ENCODE measurements at regions of chr12 and their contacts with region 1.

Region 1: DNA sequence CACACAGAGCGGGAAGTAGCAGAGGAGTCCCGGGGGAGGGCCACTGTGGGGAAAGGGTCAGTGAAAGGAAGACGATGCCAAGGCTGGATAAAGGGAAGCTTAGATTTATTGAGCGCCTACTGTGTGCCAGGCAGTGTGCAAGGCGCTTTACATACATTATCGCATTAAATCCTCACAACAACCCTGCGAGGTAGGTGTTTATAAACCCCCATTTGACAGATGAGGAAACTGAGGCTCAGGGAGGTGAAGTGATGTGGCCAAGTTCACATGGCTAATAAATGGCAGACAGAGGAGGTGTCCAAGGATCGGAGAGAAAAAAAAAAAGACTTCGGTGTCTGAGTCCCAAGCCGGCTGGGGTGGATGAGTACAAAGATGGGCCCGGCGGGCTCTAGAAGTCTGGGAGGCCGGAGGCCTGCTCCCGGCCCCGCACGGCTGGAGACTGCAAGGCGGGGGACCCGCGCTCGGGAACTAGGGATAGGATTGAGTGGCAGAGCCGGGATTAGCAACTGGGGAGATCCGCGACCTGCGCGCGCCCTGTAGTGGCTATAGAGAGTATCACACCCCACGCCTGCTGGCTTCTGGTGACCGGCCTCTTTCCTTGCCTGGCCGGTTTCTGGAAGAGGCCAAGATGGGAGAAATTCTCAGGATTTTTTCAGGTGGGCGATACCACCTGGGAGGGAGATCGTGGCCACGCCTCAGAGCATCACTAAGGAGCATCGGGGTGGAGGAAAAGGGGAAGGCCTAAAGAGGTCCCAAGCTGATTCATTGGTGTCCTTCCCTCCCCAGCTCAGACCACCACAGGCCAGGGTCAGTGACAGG is 3.9 kb downstream of the DDN start:
- DNase-seq: peak; percentile 39
- H3K4me3 Mint-ChIP-seq: no peak overlapping the region
- H3K27ac Mint-ChIP-seq: peak overlapping the region; percentile 52
- H3K4me1 Mint-ChIP-seq: peaks cover 25% of the 10 kb centered on the region
- H3K27me3 Mint-ChIP-seq: peaks cover 49% of the 10 kb centered on the region

Region 2: GRCh38 chr12:48142818-48143674 is 852.2 kb before region 1 on chr12:
- intact Hi-C with region 1: no loop called
- DNase-seq: no peak
- H3K4me3 Mint-ChIP-seq: no peak overlapping the region
- H3K27ac Mint-ChIP-seq: no peak overlapping the region
- H3K4me1 Mint-ChIP-seq: no peaks in the 10 kb centered on the region
- H3K27me3 Mint-ChIP-seq: no peaks in the 10 kb centered on the region

Region 3: DNA sequence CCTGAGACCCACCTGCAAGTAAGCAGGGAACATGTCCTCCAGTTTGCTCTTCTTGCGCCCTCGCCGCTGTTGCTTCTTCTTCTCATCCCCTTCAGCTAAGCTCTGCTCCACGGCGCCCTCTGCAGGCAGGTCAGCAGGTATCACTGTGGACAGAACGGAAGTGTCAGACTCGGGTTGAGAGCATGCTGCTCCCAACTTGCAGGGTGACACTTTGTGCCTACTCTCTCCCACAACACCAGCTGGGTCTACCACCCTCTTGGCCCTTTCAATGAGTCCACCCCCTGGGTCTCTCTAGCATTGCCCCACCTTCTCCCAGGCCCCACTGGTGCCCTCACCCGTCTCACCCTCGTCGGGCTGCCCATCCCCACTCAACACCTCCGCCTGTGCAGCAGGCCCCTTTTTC is 48.6 kb after region 1 on chr12:
- intact Hi-C with region 1: loop called (anchors 1 kb)
- DNase-seq: peak; percentile 45
- H3K4me3 Mint-ChIP-seq: no peak overlapping the region
- H3K27ac Mint-ChIP-seq: no peak overlapping the region
- H3K4me1 Mint-ChIP-seq: no peaks in the 10 kb centered on the region
- H3K27me3 Mint-ChIP-seq: no peaks in the 10 kb centered on the region

Region 4: GRCh38 chr12:49342066-49342913 is 347.0 kb after region 1 on chr12:
- intact Hi-C with region 1: loop called (anchors 5 kb)
- DNase-seq: peak; percentile 56
- H3K4me3 Mint-ChIP-seq: peak overlapping the region; percentile 37
- H3K27ac Mint-ChIP-seq: no peak overlapping the region
- H3K4me1 Mint-ChIP-seq: peaks cover 35% of the 10 kb centered on the region
- H3K27me3 Mint-ChIP-seq: peaks cover 77% of the 10 kb centered on the region